ENCODE measurements at regions of chr20 and their contacts with region 1.

Region 1: DNA sequence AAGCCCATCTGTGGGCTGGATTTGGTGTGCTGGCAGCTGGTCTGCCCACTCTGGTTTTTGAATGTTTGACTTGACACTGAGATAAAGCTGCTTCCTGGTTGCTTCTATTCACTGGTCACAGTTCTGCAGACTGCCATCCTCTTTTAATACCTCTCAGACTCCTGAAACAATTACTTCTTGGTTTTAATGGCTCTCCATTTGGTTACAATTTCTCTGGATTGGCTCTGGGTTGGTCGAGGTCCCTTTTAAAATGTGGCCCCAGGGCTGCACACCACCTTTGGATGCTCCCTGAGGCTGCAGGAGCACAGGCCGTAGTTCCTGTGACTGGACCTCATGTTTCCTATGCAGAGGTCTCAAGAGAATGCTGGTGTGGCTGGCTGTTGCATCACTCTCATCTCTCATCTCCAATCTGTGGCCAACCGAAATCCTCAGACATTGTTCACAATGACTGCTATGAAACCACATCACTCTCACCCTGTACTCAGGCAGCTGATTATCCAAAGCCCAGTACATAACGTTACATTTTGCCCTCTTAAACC is 98.5 kb downstream of the INSM1 start:
- DNase-seq: peak; percentile 30
- ATAC-seq: peak; percentile 76
- H3K4me3 Mint-ChIP-seq: peak overlapping the region; percentile 50
- H3K27ac Mint-ChIP-seq: peak overlapping the region; percentile 93
- H3K4me1 Mint-ChIP-seq: peaks cover 57% of the 10 kb centered on the region
- H3K27me3 Mint-ChIP-seq: no peaks in the 10 kb centered on the region
- CTCF ChIP-seq: no peak

Region 2: DNA sequence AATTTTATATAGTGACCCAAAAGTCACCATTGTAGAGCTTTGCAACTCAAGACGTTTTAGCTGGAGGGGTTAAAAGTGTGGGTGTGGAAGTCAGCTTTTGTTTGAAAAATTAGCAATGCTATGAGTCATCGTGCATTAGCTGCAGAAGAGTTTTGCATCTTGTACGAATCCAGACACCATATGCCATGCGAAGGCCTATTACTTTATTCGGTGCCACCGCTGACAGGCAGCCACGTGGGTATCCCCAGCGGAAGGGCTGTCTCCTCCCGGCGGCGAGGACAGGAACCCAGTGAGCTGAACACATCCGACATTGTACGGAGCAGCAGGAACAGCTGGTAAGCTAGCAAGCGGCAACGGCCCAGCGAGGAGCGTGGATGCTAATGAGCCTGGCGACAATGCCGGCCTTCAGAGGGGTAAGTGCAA is 14.1 kb before region 1 on chr20:
- CTCF ChIA-PET with region 1: interaction called, 10 read pairs
- POLR2A ChIA-PET with region 1: interaction called, 28 read pairs
- intact Hi-C with region 1: loop called (anchors 1 kb)
- DNase-seq: peak; percentile 60
- ATAC-seq: peak; percentile 99
- H3K4me3 Mint-ChIP-seq: peak overlapping the region; percentile 84
- H3K27ac Mint-ChIP-seq: peak overlapping the region; percentile 86
- H3K4me1 Mint-ChIP-seq: peaks cover 19% of the 10 kb centered on the region
- H3K27me3 Mint-ChIP-seq: no peaks in the 10 kb centered on the region
- CTCF ChIP-seq: no peak

Region 3: DNA sequence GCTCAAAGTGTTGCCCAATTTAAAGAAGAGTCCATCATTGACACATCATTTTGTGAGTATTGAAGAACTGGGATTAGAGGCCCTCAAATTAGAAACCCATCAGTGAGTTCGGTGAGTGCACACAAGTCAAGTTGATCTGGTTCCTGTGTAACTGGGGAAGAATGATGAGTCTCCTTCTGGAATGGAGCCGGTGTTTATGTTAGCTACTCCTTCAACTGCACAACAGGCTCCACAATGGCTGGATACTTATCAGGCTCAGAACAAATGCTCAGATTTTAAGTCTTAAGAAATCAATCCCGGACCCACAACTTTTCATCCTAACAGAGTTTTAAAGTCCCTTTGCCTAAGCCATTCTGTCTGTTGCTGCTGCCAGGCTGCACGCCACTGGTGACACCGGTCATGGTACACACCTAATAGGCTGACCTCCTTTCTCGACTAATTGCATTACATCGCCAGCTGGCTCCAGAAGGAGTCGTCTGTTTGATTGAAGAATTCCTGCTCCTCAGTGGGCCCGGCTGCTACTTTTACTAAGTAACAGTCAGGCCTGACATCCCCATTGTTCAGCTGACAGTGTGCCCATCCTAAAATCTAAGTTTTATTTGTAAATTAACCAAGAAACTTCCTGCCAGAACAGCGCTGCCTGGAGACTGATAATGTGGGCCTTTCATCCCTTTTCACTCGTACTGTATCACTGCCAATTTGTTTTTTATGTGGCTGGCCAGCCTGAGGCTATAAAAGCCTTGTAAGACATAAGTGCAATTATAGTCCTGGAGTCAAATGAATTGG is 31.9 kb after region 1 on chr20:
- CTCF ChIA-PET with region 1: no interaction called
- POLR2A ChIA-PET with region 1: interaction called, 3 read pairs
- intact Hi-C with region 1: loop called (anchors 5 kb)
- DNase-seq: no peak
- ATAC-seq: no peak
- H3K4me3 Mint-ChIP-seq: no peak overlapping the region
- H3K27ac Mint-ChIP-seq: no peak overlapping the region
- H3K4me1 Mint-ChIP-seq: no peaks in the 10 kb centered on the region
- H3K27me3 Mint-ChIP-seq: no peaks in the 10 kb centered on the region
- CTCF ChIP-seq: no peak

Region 4: DNA sequence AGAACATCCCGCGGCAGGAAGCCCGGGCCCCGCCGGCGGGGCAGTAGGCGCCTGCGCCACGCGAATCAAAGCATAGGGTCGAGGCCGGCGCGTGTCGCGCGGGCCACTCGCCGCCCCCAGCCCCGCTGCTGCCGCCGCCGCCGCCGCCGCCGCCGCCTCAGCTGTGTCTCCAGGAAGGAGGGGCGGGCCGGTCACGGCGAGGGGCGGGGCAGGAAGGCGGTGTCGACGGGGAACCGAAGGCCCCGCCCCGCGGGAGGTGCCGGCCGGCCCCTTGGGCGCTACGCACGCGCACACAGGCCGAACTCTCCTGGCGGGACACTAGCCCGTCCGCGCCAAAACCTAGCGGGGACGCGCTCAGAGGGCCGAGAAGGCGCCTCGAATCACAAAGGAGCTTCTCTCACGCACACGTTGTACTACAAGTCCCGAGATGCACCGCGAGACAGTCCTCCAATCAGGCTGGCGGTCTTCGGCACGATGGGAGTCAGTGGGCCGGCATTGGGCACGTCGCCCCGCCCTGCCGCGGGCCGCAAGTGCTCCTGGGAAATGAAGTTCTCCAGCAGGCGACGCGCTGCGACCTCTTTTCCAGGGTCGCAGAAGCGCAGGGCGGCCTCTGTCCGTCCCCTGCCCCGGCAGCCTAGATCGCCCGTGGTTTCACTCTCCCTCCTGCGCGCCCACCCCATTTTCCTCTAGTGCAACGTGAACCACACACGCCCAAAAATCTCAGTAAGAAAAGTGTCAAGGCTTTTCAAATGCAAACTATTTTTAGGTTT is 246.2 kb after region 1 on chr20 and contains the start of gene RALGAPA2:
- CTCF ChIA-PET with region 1: no interaction called
- POLR2A ChIA-PET with region 1: interaction called, 5 read pairs
- intact Hi-C with region 1: loop called (anchors 1 kb)
- DNase-seq: peak; percentile 97
- ATAC-seq: peak; percentile 96
- H3K4me3 Mint-ChIP-seq: peak within 1 kb of the TSS; percentile 90
- H3K27ac Mint-ChIP-seq: peak within 1 kb of the TSS; percentile 92
- H3K4me1 Mint-ChIP-seq: peaks cover 26% of the 10 kb centered on the region
- H3K27me3 Mint-ChIP-seq: no peaks in the 10 kb centered on the region
- CTCF ChIP-seq: no peak
- total RNA-seq, gene RALGAPA2: 16.5 and 19.2 TPM in 2 replicates

Measured in activated B cell treated with CpG ODN at 0.5 μM for 24 hours (primary cell).